Cardiac septum (tissue), 1 donor: ENCODE measurements at regions of chr9 and their contacts with region 1.

Region 1: DNA sequence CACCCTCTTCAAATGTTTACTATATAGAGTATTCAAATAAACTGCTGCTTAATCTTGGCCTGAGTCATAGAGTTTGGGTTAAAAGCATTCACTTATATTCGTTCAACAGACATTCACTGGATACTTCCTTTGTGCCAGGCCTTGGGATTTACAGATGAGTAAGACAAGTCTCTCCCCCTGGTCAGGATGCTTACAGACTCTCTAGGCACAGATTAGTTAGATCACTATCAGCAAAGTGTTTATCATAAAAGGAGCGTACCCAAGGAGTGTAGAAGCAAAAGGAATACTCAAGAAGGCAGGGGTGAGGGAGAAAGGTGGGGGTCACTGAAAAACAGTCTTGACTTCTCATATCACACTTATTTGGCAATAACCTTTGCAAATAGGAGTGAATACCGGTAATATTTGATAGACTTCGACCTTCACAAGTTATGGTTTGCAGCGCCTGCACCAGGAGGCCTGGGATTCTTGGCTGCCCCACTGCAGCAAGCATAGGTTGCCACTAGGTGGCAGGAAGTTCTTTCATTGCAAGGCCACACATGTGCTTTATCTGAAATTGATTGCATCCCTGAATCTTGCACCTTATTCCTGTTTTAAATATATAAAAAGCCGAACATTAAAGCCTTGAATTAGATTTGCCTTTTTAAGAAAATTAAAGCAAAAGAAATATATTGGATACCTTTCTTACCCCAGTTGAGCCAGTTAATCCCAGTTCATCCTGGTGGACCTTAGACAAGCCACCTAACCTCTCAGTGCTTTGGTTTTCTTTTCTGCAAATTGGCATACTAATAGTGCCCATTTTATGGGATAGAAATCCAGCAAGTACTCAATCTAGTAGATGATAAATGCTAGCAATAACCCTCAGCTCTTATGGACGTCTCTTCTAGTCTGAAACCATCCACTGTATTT is 6.5 kb upstream of the TRMT10B start:
- DNase-seq: no peak

Region 2: DNA sequence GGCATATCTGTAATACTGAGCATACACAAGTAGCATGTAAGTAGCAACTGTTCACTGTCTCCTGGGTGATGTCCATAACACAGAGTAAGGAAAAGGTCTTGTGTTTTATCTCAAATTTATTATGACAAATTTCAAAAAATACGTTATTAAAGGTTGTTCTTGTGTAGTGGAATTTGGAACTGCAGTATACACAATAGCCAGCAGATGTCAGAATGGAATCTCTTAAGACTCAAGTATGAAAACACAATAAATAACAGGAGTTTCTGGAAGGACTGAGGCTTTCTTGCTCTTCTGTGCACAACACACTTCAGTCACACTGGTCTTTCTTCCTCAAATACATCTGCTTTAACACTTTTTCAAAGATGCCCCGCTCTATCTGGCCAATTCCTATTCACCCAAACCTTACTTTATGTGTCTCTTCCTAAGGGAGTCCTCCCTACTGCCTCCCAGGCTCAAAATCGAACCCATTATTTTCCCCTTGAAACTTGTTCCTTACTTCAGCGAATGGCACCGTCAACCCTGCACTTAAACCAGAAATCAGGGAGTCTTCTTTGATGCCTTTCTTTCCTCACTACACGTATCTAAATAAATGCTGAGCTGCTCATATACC is 164.4 kb before region 1 on chr9:
- intact Hi-C with region 1: loop called (anchors 10 kb)
- DNase-seq: no peak

Region 3: DNA sequence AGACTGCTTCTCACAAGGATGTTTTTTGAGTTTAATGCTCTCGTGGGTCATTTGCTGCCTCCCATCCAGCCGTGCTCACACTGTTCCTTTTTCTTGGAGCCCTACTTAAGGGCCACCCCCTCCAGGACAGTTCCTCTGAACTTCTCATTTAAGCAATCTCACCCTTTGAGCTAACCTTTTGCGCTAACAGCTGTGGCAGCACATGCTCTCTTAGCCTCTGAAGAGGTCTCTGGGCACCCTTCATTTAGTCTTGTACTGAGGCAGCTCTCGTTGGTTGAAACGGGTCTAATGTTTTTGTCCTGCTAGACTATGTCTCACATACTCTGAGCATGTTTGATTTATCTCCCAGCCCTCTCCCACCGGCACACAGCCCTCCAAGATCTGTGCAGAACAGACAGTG is 657.2 kb after region 1 on chr9:
- intact Hi-C with region 1: loop called (anchors 5 kb)
- DNase-seq: no peak